ENCODE measurements at regions of chr1 and their contacts with region 1.

Region 1: GRCh38 chr1:172180501-172181285 is 239.8 kb upstream of the C1orf105 start:
- DNase-seq: peak; percentile 75
- H3K4me3 ChIP-seq: peak overlapping the region in 1 of 3 experiments; percentile 58
- H3K27ac ChIP-seq: peak overlapping the region; percentile 46
- H3K4me1 ChIP-seq: peaks cover 11% of the 10 kb centered on the region
- H3K27me3 ChIP-seq: no peaks in the 10 kb centered on the region
- CTCF ChIP-seq: no peak
- POLR2A ChIP-seq: no peak

Region 2: GRCh38 chr1:172163498-172164215 is 17.0 kb before region 1 on chr1:
- CTCF ChIA-PET with region 1: interaction called, 4 read pairs
- POLR2A ChIA-PET with region 1: no interaction called
- dilution Hi-C with region 1: no loop called
- intact Hi-C with region 1: loop called (anchors 2 kb)
- DNase-seq: no peak
- H3K4me3 ChIP-seq: no peak overlapping the region
- H3K27ac ChIP-seq: no peak overlapping the region
- H3K4me1 ChIP-seq: no peaks in the 10 kb centered on the region
- H3K27me3 ChIP-seq: no peaks in the 10 kb centered on the region
- CTCF ChIP-seq: no peak
- POLR2A ChIP-seq: no peak

Region 3: DNA sequence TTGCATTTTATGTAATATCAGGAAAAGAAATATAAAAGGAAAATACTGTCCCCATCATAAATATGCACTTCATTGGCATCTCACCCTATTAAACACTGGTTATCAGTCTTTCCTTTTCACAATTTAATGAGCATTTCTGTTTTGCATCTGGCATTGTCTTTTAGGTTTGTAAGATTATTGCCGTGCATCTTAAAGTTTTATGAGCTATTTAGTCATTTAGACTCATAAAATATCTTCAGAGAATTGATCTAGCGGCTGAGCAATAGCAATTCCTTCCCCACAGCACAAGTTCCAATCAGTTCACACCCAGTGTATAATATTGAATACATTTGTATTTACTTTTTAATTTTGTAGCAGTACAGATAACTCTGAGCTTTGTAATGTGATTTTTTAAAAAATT is 127.4 kb after region 1 on chr1:
- CTCF ChIA-PET with region 1: no interaction called
- POLR2A ChIA-PET with region 1: no interaction called
- dilution Hi-C with region 1: no loop called
- intact Hi-C with region 1: no loop called
- DNase-seq: no peak
- H3K4me3 ChIP-seq: no peak overlapping the region
- H3K27ac ChIP-seq: no peak overlapping the region
- H3K4me1 ChIP-seq: no peaks in the 10 kb centered on the region
- H3K27me3 ChIP-seq: no peaks in the 10 kb centered on the region
- CTCF ChIP-seq: no peak
- POLR2A ChIP-seq: no peak

Measured in endothelial cell of umbilical vein (primary cell).